Gastrocnemius medialis (tissue), 4 donors: ENCODE measurements at regions of chr3 and their contacts with region 1.

Region 1: GRCh38 chr3:157639756-157640426 is 136.7 kb upstream of the VEPH1 start:
- DNase-seq: no peak
- ATAC-seq: no peak
- H3K4me3 ChIP-seq: no peak overlapping the region
- H3K27ac ChIP-seq: no peak overlapping the region
- H3K4me1 ChIP-seq: no peaks in the 10 kb centered on the region
- H3K27me3 ChIP-seq: no peaks in the 10 kb centered on the region
- CTCF ChIP-seq: no peak
- POLR2A ChIP-seq: no peak

Region 2: GRCh38 chr3:158152186-158152585 is 512.3 kb after region 1 on chr3:
- in situ Hi-C with region 1: no loop called
- intact Hi-C with region 1: loop called (anchors 5 kb)
- DNase-seq: no peak
- ATAC-seq: no peak
- H3K4me3 ChIP-seq: no peak overlapping the region
- H3K27ac ChIP-seq: no peak overlapping the region
- H3K4me1 ChIP-seq: no peaks in the 10 kb centered on the region
- H3K27me3 ChIP-seq: no peaks in the 10 kb centered on the region
- CTCF ChIP-seq: no peak
- POLR2A ChIP-seq: no peak